ENCODE measurements at regions of chr11 and their contacts with region 1.

Region 1: DNA sequence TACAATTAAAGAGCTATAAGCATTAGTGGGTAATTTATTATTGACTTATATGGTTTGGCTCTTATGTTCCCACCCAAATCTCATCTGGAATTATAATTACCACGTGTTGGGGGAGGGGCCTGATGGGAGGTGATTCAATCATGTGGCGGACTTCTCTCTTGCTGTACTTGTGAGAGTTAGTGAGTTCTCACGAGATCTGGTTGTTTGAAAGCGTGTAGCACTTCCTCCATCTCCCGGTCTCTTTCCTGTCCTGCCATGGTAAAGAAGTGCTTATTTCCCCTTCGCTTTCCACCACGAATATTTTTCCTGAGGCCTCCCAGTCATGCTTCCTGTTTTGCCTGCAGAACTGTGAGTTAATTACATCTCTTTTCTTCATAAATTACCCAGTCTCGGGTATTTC is 28.1 kb upstream of the CHORDC1 start:
- DNase-seq: no peak
- ATAC-seq: peak; percentile 21
- H3K4me3 Mint-ChIP-seq: peak overlapping the region; percentile 74
- H3K27ac Mint-ChIP-seq: peak overlapping the region; percentile 21
- H3K4me1 Mint-ChIP-seq: peaks cover 6% of the 10 kb centered on the region
- H3K27me3 Mint-ChIP-seq: peaks cover 9% of the 10 kb centered on the region
- CTCF ChIP-seq: no peak

Region 2: DNA sequence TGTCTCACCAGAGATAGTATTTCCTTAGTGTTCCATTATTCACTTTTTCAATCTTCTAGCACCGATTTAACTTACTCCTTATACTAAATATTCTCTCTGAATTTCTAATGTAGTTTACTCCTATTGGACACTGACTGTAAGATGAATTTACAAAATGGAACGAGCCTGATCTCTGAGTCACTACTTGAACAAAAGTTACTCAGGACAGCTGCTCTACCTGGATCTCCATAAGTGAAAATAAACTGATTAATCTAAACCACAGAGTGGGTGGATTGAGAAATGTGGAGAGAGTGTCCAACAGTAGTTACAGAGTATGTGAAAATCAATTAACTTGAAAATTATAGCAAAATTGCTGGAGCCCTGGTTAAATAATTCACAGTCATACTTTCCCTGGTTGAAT is 113.6 kb after region 1 on chr11:
- CTCF ChIA-PET with region 1: no interaction called
- POLR2A ChIA-PET with region 1: no interaction called
- intact Hi-C with region 1: no loop called
- DNase-seq: no peak
- ATAC-seq: no peak
- H3K4me3 Mint-ChIP-seq: no peak overlapping the region
- H3K27ac Mint-ChIP-seq: no peak overlapping the region
- H3K4me1 Mint-ChIP-seq: no peaks in the 10 kb centered on the region
- H3K27me3 Mint-ChIP-seq: no peaks in the 10 kb centered on the region
- CTCF ChIP-seq: no peak

Region 3: DNA sequence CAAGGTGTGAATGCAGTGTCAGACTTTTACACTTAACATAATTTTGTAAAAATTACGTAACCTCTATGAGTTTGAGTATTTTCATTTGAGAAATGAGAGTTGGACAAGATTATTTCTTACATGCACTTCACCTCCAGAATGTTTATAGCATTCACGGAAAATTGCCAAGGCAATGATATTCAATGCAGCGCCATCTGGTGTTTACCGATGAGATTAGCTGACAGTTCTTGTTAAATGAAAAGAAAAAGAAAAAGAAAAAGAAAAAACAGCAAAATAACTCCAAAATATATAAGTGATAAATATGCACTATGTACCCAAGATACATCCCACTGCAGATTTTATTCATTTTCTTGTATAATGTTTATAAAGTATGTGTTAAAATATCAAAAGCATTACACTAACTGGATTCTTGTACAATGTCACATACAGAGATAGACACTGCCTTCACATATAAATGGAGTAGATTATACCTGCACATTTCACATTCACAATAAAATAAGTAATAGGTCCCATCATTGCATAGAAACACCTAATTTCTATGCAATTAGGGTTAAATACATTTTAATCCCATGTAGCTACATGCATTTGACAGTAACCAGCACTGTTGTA is 997.3 kb after region 1 on chr11:
- CTCF ChIA-PET with region 1: no interaction called
- POLR2A ChIA-PET with region 1: no interaction called
- intact Hi-C with region 1: loop called (anchors 5 kb)
- DNase-seq: no peak
- ATAC-seq: no peak
- H3K4me3 Mint-ChIP-seq: no peak overlapping the region
- H3K27ac Mint-ChIP-seq: no peak overlapping the region
- H3K4me1 Mint-ChIP-seq: no peaks in the 10 kb centered on the region
- H3K27me3 Mint-ChIP-seq: no peaks in the 10 kb centered on the region
- CTCF ChIP-seq: no peak

Measured in activated B cell treated with CpG ODN at 0.5 μM for 24 hours (primary cell).